ENCODE measurements at regions of chr6 and their contacts with region 1.

Region 1: DNA sequence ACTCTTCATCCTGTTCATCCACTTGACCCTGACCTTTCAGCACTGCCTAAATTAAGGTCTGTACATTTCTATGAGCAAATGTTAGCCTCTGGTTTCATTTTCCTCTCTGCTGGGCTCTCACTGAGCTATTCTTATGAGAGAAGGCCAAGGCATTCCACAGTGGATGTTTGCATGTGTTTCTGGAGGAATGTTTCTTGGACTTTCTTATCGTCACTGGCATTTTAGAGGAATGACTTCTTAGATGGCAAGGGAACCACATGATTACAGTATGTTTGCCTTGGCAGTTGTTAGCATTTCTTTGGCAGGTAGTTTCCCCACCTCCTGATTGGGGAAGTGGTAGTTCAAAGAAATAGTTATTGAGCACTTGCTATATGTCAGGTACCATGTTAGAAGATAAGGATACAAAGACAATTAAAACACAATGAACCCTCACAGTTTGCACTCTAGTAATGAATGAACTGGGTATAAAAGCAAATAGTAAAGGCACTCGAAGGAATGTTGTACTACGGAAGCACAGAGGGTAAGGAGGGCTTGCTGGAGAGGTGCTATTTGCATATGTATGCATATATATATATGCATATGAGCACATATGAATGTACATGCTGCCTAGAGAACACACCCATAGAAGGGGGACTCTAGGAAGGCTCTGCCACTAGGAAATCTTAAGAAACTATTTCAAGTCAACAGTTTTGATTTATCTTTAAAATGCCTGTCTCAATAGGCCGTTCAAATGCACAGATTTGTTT is 307.4 kb downstream of the EYA4 start:
- DNase-seq: peak; percentile 67
- H3K4me3 ChIP-seq: no peak overlapping the region
- H3K27ac ChIP-seq: no peak overlapping the region
- H3K4me1 ChIP-seq: peaks cover 36% of the 10 kb centered on the region
- H3K27me3 ChIP-seq: no peaks in the 10 kb centered on the region

Region 2: GRCh38 chr6:132830334-132830751 is 718.2 kb before region 1 on chr6:
- in situ Hi-C with region 1: loop called (anchors 25 kb)
- DNase-seq: peak; percentile 69
- H3K4me3 ChIP-seq: no peak overlapping the region
- H3K27ac ChIP-seq: no peak overlapping the region
- H3K4me1 ChIP-seq: no peaks in the 10 kb centered on the region
- H3K27me3 ChIP-seq: no peaks in the 10 kb centered on the region

Region 3: GRCh38 chr6:133991096-133991593 is 442.6 kb after region 1 on chr6:
- in situ Hi-C with region 1: no loop called
- DNase-seq: peak; percentile 58
- H3K4me3 ChIP-seq: no peak overlapping the region
- H3K27ac ChIP-seq: no peak overlapping the region
- H3K4me1 ChIP-seq: peaks cover 13% of the 10 kb centered on the region
- H3K27me3 ChIP-seq: no peaks in the 10 kb centered on the region

Measured in GM23248 (cell line).